ENCODE measurements at regions of chr1 and their contacts with region 1.

Region 1: DNA sequence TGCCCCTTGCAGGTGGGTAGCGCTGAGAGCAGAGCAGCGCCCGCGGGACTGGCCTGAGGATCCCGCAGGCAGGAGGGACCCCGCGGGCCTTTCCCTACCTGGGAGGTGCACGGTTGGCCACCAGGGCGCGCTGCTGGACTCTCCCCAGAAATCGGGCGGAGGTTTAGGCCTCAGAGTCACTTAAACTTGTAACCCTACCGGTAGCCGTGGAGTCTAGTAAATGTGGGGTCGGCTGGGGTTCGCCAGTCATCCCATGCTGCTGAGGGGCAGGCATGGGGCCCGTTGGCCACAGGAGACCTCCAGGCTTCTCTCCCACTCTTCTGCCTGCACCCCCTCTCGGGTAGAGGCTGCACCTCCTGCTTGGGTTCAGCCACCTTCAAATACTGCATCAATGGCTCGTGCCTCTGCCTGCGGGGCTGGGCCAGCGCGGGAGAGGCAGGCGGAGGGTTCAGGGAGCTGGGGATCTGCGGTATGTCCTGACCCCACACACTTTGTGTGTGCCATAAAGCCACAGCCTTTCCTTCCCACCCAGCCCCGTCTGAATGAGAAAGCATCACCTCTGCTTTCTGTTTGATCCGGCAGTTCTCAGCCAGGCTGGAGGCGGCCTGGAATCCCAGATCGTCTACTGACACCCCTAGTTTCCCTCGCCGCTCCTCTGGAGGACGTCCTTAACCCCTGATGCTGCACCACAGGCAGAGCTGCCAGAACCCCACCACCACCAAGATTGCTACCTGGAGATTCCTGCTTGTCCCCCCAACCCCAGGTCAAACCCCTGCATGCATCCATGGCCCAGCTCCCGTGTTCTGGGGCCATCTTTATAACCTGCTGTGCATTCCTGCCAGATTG is 12.3 kb upstream of the GSTM4 start:
- DNase-seq: peak; percentile 93
- ATAC-seq: peak; percentile 98
- H3K4me3 Mint-ChIP-seq: no peak overlapping the region
- H3K27ac Mint-ChIP-seq: peak overlapping the region; percentile 25
- H3K4me1 Mint-ChIP-seq: peaks cover 18% of the 10 kb centered on the region
- H3K27me3 Mint-ChIP-seq: peaks cover 8% of the 10 kb centered on the region

Region 2: DNA sequence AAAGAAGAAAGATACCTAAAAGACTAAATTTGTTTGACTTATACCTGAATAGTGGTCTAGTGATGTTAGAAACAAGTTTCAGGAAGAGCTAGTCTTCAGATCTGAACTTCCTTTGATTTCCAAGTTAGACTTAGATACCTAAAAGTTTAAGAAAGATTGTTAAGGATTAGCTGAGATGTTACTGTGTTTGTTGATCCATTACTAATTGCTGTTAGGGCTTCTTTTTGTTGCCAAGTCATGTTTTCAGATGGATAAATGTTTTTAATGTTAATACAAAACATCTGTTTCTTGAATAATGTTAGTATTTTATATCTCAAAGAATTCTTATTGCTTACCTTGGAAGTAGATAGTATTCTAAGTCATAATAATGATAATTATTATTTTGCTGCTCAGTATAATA is 83.6 kb before region 1 on chr1:
- CTCF ChIA-PET with region 1: interaction called, 17 read pairs
- POLR2A ChIA-PET with region 1: no interaction called
- DNase-seq: no peak
- ATAC-seq: no peak
- H3K4me3 Mint-ChIP-seq: no peak overlapping the region
- H3K27ac Mint-ChIP-seq: no peak overlapping the region
- H3K4me1 Mint-ChIP-seq: peaks cover 30% of the 10 kb centered on the region
- H3K27me3 Mint-ChIP-seq: no peaks in the 10 kb centered on the region

Region 3: GRCh38 chr1:109620841-109621286 is 22.7 kb before region 1 on chr1:
- CTCF ChIA-PET with region 1: interaction called, 129 read pairs
- POLR2A ChIA-PET with region 1: interaction called, 5 read pairs
- DNase-seq: peak; percentile 99
- ATAC-seq: peak; percentile 83
- H3K4me3 Mint-ChIP-seq: peak overlapping the region; percentile 95
- H3K27ac Mint-ChIP-seq: peak overlapping the region; percentile 96
- H3K4me1 Mint-ChIP-seq: peaks cover 74% of the 10 kb centered on the region
- H3K27me3 Mint-ChIP-seq: no peaks in the 10 kb centered on the region

Region 4: GRCh38 chr1:109687616-109688499 is 44.2 kb after region 1 on chr1 and contains the start of gene GSTM1:
- CTCF ChIA-PET with region 1: interaction called, 35 read pairs
- POLR2A ChIA-PET with region 1: no interaction called
- DNase-seq: peak; percentile 85
- ATAC-seq: peak; percentile 100
- H3K4me3 Mint-ChIP-seq: peak within 1 kb of the TSS; percentile 85
- H3K27ac Mint-ChIP-seq: peak within 1 kb of the TSS; percentile 92
- H3K4me1 Mint-ChIP-seq: peaks cover 10% of the 10 kb centered on the region
- H3K27me3 Mint-ChIP-seq: no peaks in the 10 kb centered on the region
- total RNA-seq, gene GSTM1: 30.2 to 31.5 TPM

Region 5: GRCh38 chr1:109762821-109763645 is 119.4 kb after region 1 on chr1:
- CTCF ChIA-PET with region 1: interaction called, 11 read pairs
- POLR2A ChIA-PET with region 1: no interaction called
- DNase-seq: no peak
- ATAC-seq: no peak
- H3K4me3 Mint-ChIP-seq: no peak overlapping the region
- H3K27ac Mint-ChIP-seq: no peak overlapping the region
- H3K4me1 Mint-ChIP-seq: peaks cover 2% of the 10 kb centered on the region
- H3K27me3 Mint-ChIP-seq: no peaks in the 10 kb centered on the region

Region 6: GRCh38 chr1:109838838-109839240 is 195.2 kb after region 1 on chr1:
- CTCF ChIA-PET with region 1: no interaction called
- POLR2A ChIA-PET with region 1: no interaction called
- DNase-seq: no peak
- ATAC-seq: no peak
- H3K4me3 Mint-ChIP-seq: no peak overlapping the region
- H3K27ac Mint-ChIP-seq: no peak overlapping the region
- H3K4me1 Mint-ChIP-seq: no peaks in the 10 kb centered on the region
- H3K27me3 Mint-ChIP-seq: peaks cover 10% of the 10 kb centered on the region

Region 7: GRCh38 chr1:109993885-109994284 is 350.3 kb after region 1 on chr1:
- CTCF ChIA-PET with region 1: interaction called, 11 read pairs
- POLR2A ChIA-PET with region 1: no interaction called
- DNase-seq: no peak
- ATAC-seq: no peak
- H3K4me3 Mint-ChIP-seq: no peak overlapping the region
- H3K27ac Mint-ChIP-seq: no peak overlapping the region
- H3K4me1 Mint-ChIP-seq: peaks cover 7% of the 10 kb centered on the region
- H3K27me3 Mint-ChIP-seq: no peaks in the 10 kb centered on the region

Measured in activated CD8-positive, alpha-beta T cell treated with anti-CD3 and anti-CD28 coated beads, Interleukin-2, amount 10 ng/mL, durations not matched to agents 7 days and 5 days (primary cell).